Dorsolateral prefrontal cortex (tissue), 120 donors: ENCODE measurements at regions of chr14 and their contacts with region 1.

Region 1: DNA sequence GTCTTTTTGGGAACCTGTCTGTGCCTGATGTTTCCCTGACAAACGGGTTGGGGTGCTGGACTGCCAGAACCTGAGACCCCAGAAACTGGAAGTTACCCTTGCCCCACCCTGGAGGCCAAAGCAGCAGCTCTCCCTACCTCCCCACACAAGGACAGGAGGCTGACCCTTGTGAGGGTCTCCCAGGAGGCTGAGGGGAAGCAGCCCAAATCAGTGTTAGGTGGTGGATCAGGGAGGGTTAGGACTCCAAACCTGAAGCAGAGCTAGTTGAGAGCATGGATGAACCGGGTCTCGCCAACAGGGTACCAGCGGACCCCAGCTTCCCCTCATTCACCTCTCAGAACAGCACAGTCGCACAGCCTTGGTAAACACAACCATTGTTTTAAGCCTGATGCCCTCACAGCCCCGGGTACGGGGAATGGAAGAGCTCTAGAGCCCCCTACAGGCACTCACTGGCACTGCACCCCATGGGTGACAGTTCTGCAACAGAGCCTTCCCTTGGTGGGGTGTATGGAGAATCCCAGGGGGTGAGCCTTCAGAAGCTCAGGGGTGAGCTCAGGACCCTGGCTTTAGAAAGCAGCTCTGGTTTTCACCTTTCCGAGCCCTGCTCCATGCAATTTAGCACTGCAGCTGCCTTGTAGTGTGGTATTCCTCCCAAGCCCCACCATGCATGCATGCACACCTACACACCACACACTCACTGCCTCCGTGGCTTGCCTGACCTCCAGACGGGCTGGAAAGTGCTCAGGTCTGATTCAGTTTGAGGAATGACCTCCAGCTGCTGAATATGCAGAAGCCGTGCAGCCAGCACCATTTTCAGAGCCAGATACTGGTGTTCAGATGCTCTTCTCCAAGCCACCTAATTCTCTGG is 11.2 kb downstream of the ESRRB start:
- DNase-seq: peak; percentile 43 to 84 (median 70)
- H3K4me3 ChIP-seq: no peak overlapping the region
- H3K27ac ChIP-seq: no peak overlapping the region
- H3K27me3 ChIP-seq: peaks cover 0 to 45% (median 8%) of the 10 kb centered on the region in 45 donors
- CTCF ChIP-seq: peak; percentile 55 to 99 (median 94)

Region 2: GRCh38 chr14:75577729-75578101 is 809.4 kb before region 1 on chr14:
- intact Hi-C with region 1: loop called in 1 of 2 experiments (anchors 10 kb)
- DNase-seq: peak; percentile 72 to 88 (median 80)
- H3K4me3 ChIP-seq: peak overlapping the region; percentile 24 to 78 (median 62)
- H3K27ac ChIP-seq: peak overlapping the region in 47 of 59 donors; percentile 1 to 85 (median 71)
- H3K27me3 ChIP-seq: peaks cover 0 to 4% (median 0%) of the 10 kb centered on the region in 45 donors
- CTCF ChIP-seq: peak in 55 of 56 donors; percentile 51 to 90 (median 74)

Region 3: GRCh38 chr14:75911883-75912282 is 475.3 kb before region 1 on chr14:
- intact Hi-C with region 1: loop called in 1 of 2 experiments (anchors 5 kb)
- DNase-seq: peak in 8 of 10 donors; percentile 35 to 73 (median 68)
- H3K4me3 ChIP-seq: peak overlapping the region in 6 of 59 donors; percentile 0 to 22 (median 8)
- H3K27ac ChIP-seq: peak overlapping the region in 56 of 59 donors; percentile 11 to 89 (median 72)
- H3K27me3 ChIP-seq: no peaks in the 10 kb centered on the region
- CTCF ChIP-seq: peak in 7 of 56 donors; percentile 9 to 43 (median 16)

Region 4: GRCh38 chr14:76352639-76353281 is 34.4 kb before region 1 on chr14:
- intact Hi-C with region 1: loop called in 1 of 2 experiments (anchors 5 kb)
- DNase-seq: peak in 6 of 10 donors; percentile 20 to 71 (median 36)
- H3K4me3 ChIP-seq: peak overlapping the region in 55 of 59 donors; percentile 1 to 60 (median 35)
- H3K27ac ChIP-seq: no peak overlapping the region
- H3K27me3 ChIP-seq: peaks cover 0 to 22% (median 0%) of the 10 kb centered on the region in 45 donors
- CTCF ChIP-seq: peak; percentile 49 to 95 (median 86)

Region 5: GRCh38 chr14:76486251-76486743 is 99.1 kb after region 1 on chr14:
- intact Hi-C with region 1: no loop called
- DNase-seq: no peak
- H3K4me3 ChIP-seq: no peak overlapping the region
- H3K27ac ChIP-seq: no peak overlapping the region
- H3K27me3 ChIP-seq: peaks cover 0 to 3% (median 0%) of the 10 kb centered on the region in 45 donors
- CTCF ChIP-seq: no peak